ENCODE measurements at regions of chr5 and their contacts with region 1.

Region 1: DNA sequence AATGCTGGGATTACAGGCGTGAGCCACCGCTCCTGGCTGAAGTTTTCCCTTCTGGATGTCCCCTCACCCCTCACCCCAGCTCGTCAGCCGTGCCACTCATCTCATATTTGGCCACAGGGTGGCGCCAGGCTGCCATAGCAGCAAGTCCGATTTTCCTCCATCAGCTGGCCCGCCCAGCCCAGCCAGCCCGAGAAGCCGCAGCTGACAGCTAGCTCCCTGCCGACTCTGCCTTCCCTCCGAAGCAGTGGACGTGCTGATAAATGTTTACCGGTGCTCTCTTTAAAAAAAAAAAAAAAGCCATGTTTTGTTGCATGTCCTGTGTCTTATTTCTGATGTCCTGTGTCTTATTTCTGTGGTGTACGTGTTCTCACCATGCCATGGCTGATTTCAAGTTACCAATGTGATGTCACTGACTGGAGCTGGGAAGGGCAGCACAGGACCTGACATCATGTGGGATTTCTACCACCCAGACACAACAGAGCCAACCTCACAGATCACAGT is 58.3 kb downstream of the PFDN1 start:
- H3K4me3 Mint-ChIP-seq: no peak overlapping the region
- H3K27ac Mint-ChIP-seq: no peak overlapping the region
- H3K4me1 Mint-ChIP-seq: peaks cover 23% of the 10 kb centered on the region
- H3K27me3 Mint-ChIP-seq: no peaks in the 10 kb centered on the region

Region 2: DNA sequence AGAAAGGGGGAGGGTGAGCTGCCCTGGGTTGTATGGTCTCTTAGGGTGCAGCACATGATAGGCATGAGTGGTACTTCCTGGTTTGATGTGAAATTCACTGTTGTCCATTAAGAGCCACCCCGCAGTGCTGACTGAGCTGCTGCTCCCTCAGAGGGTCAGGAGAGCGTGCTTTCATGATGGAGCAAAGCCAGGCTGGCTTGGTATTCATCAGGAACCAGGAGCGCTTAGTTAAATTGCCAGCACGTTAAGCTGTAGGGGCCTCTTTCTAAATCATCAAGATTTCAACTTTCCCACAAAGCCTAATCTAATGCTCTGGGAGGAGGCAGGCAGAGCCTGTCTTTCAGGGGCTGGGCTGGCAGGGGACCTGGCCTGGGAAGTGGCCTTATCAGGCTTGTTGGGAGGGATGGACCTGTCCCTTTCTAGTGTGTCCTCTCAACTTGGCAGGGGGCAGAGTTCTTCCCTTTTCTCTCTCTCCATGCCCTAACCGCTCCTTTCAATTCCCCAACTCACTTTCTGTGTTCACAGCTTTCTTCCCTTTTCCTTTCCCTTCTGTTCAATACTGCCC is 61.7 kb before region 1 on chr5:
- intact Hi-C with region 1: no loop called
- H3K4me3 Mint-ChIP-seq: no peak overlapping the region
- H3K27ac Mint-ChIP-seq: peak overlapping the region; percentile 62
- H3K4me1 Mint-ChIP-seq: peaks cover 44% of the 10 kb centered on the region
- H3K27me3 Mint-ChIP-seq: no peaks in the 10 kb centered on the region

Region 3: DNA sequence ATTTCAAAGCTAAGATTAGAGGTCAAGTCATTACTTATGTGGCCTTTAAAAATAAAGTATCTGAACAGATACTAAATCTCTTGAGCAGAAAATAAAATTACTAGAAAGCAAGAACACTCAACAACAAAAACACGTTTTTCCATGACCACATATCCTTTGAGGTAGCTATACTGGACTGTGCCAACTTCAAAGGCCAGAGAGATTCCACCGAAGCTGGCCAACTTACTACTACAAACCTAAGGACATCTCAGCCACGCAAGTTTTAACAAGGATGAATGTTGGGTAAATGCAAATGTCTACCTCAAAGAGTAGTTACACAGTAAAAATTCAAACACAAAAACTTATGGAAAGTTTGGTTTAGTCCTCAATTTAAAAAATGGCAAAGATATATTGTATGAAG is 39.4 kb after region 1 on chr5:
- intact Hi-C with region 1: loop called (anchors 5 kb)
- H3K4me3 Mint-ChIP-seq: no peak overlapping the region
- H3K27ac Mint-ChIP-seq: no peak overlapping the region
- H3K4me1 Mint-ChIP-seq: peaks cover 24% of the 10 kb centered on the region
- H3K27me3 Mint-ChIP-seq: no peaks in the 10 kb centered on the region

Region 4: GRCh38 chr5:140351609-140352334 is 107.2 kb after region 1 on chr5:
- intact Hi-C with region 1: loop called (anchors 1 kb)
- H3K4me3 Mint-ChIP-seq: no peak overlapping the region
- H3K27ac Mint-ChIP-seq: no peak overlapping the region
- H3K4me1 Mint-ChIP-seq: peaks cover 13% of the 10 kb centered on the region
- H3K27me3 Mint-ChIP-seq: peaks cover 2% of the 10 kb centered on the region